WTC11 (cell line): ENCODE measurements at regions of chr22 and their contacts with region 1.

Region 1: GRCh38 chr22:20238536-20238900 is 29.6 kb downstream of the RTN4R start:
- DNase-seq: peak; percentile 89
- ATAC-seq: peak; percentile 91
- H3K4me3 Mint-ChIP-seq: no peak overlapping the region
- H3K27ac Mint-ChIP-seq: no peak overlapping the region
- H3K4me1 Mint-ChIP-seq: peaks cover 16% of the 10 kb centered on the region
- H3K27me3 Mint-ChIP-seq: no peaks in the 10 kb centered on the region
- CTCF ChIP-seq: peak; percentile 58; the same call in 1 of the 2 replicates

Region 2: DNA sequence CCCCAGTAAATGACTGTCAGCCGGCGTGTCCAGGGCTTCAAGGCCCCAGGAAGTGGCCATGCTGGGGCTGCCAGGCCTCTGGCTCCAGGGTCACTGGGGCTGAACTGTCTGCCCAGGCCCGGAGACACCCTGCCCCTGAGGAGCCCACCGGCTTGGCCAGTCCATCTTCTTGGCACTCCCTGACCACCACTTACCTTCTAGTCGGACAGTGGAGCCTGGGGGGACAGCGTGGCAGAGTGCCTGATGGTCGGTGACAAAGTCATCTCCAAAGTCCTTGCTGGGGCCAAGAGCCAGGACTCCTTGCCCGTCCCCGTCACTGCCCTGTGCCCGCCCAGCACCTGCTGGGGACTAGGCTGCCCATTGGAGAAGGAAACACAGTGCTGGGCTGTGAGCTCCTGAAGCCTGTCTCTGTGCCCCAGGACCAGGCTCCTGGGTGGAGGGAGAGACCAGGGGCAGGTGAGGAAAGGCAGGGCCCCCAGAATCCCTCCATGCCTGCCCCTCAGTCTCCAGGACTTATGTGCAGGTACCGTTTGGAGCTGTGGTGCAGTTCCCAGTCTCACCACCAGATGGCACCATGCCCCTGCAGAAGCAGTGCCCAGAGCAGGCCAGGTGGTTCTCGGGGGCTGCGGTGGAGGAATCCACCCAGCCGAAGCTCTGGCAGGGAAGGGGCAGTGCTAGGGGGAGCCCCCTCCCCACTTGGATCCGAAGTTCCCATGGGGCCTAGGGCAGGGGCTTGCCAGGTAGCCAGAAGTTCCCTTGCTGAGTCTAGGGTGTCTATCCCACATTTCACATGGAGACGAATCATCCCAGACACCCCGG is 81.7 kb before region 1 on chr22:
- CTCF ChIA-PET with region 1: interaction called, 69 read pairs
- POLR2A ChIA-PET with region 1: interaction called, 3 read pairs
- DNase-seq: peak; percentile 97
- ATAC-seq: peak; percentile 64
- H3K4me3 Mint-ChIP-seq: no peak overlapping the region
- H3K27ac Mint-ChIP-seq: no peak overlapping the region
- H3K4me1 Mint-ChIP-seq: peaks cover 7% of the 10 kb centered on the region
- H3K27me3 Mint-ChIP-seq: no peaks in the 10 kb centered on the region
- CTCF ChIP-seq: peak; percentile 100

Region 3: DNA sequence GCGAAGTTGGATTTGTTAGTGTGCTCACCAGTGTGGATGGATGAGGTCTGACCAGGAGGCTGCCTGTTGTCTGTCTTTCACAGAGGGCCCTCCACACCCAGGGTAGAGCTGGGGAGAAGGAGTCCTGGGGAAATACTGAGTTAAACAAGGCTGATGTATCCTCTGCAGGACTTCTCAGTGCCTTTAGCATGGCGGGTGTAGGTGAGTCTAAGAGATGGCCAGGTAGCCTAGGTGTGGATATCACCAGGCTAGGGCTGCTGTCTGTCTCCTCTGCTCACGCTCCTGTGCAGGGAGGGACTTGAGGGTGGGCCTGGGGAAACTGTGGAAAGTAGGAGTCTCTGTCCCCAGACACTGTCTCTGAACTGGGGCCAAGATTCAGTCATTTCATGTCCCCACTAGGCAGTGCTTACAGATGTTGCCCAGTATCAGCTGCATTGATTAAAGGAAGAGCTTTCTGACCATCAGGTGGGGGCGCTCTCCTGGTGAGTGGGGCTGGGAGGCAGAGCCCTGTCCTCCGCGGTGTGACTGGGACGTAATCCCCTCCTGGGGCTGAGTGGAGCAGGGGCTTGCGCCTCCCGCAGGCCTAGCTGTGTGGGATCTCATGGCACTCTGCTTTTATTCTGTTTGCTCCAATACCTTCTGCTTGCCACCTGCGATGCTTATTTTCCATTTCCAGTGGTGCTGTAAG is 52.2 kb before region 1 on chr22:
- CTCF ChIA-PET with region 1: interaction called, 46 read pairs
- POLR2A ChIA-PET with region 1: no interaction called
- DNase-seq: peak; percentile 81
- ATAC-seq: peak; percentile 95
- H3K4me3 Mint-ChIP-seq: no peak overlapping the region
- H3K27ac Mint-ChIP-seq: no peak overlapping the region
- H3K4me1 Mint-ChIP-seq: no peaks in the 10 kb centered on the region
- H3K27me3 Mint-ChIP-seq: no peaks in the 10 kb centered on the region
- CTCF ChIP-seq: no peak

Region 4: GRCh38 chr22:20205964-20206708 is 32.4 kb before region 1 on chr22:
- CTCF ChIA-PET with region 1: interaction called, 47 read pairs
- POLR2A ChIA-PET with region 1: no interaction called
- DNase-seq: no peak
- ATAC-seq: peak; percentile 52
- H3K4me3 Mint-ChIP-seq: peak overlapping the region; percentile 38
- H3K27ac Mint-ChIP-seq: peak overlapping the region; percentile 82
- H3K4me1 Mint-ChIP-seq: peaks cover 33% of the 10 kb centered on the region
- H3K27me3 Mint-ChIP-seq: no peaks in the 10 kb centered on the region
- CTCF ChIP-seq: no peak

Region 5: GRCh38 chr22:20219667-20220628 is 18.6 kb before region 1 on chr22:
- CTCF ChIA-PET with region 1: interaction called, 39 read pairs
- POLR2A ChIA-PET with region 1: no interaction called
- DNase-seq: no peak
- ATAC-seq: peak; percentile 54
- H3K4me3 Mint-ChIP-seq: no peak overlapping the region
- H3K27ac Mint-ChIP-seq: no peak overlapping the region
- H3K4me1 Mint-ChIP-seq: no peaks in the 10 kb centered on the region
- H3K27me3 Mint-ChIP-seq: peaks cover 3% of the 10 kb centered on the region; the same call in 1 of the 2 replicates
- CTCF ChIP-seq: no peak

Region 6: DNA sequence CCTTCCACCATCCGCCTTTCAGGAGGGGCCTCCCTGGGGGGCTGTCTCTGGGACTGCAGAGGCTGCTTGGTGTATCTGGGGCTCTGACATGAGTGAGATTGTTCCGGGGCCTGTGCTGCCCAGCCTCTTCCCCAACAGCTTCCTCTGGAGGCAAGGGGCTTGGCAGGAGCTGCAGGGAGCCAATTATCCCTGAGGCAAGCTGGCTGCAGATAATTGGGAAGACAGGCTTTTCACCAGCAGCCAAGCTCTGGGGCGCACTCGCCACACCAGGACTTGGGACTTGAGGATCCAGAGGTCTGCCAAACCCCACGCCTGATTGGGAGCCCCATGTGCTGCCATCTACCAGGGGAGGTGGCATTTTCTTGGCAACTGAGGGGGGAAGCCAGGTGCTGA is 45.2 kb after region 1 on chr22:
- CTCF ChIA-PET with region 1: interaction called, 22 read pairs
- POLR2A ChIA-PET with region 1: no interaction called
- DNase-seq: no peak
- ATAC-seq: no peak
- H3K4me3 Mint-ChIP-seq: no peak overlapping the region
- H3K27ac Mint-ChIP-seq: no peak overlapping the region
- H3K4me1 Mint-ChIP-seq: no peaks in the 10 kb centered on the region
- H3K27me3 Mint-ChIP-seq: no peaks in the 10 kb centered on the region
- CTCF ChIP-seq: no peak

Region 7: GRCh38 chr22:20298803-20299735 is 60.6 kb after region 1 on chr22:
- CTCF ChIA-PET with region 1: interaction called, 13 read pairs
- POLR2A ChIA-PET with region 1: interaction called, 3 read pairs
- DNase-seq: peak; percentile 96
- ATAC-seq: peak; percentile 85
- H3K4me3 Mint-ChIP-seq: peak overlapping the region; percentile 65
- H3K27ac Mint-ChIP-seq: no peak overlapping the region
- H3K4me1 Mint-ChIP-seq: peaks cover 6% of the 10 kb centered on the region; the same call in 1 of the 2 replicates
- H3K27me3 Mint-ChIP-seq: peaks cover 53% of the 10 kb centered on the region
- CTCF ChIP-seq: no peak

Region 8: GRCh38 chr22:20422271-20423007 is 183.9 kb after region 1 on chr22:
- CTCF ChIA-PET with region 1: no interaction called
- POLR2A ChIA-PET with region 1: no interaction called
- DNase-seq: no peak
- ATAC-seq: no peak
- H3K4me3 Mint-ChIP-seq: no peak overlapping the region
- H3K27ac Mint-ChIP-seq: no peak overlapping the region
- H3K4me1 Mint-ChIP-seq: peaks cover 8% of the 10 kb centered on the region
- H3K27me3 Mint-ChIP-seq: peaks cover 2% of the 10 kb centered on the region; the same call in 1 of the 2 replicates
- CTCF ChIP-seq: no peak